Heart right ventricle (tissue), 16 donors: ENCODE measurements at regions of chr15 and their contacts with region 1.

Region 1: DNA sequence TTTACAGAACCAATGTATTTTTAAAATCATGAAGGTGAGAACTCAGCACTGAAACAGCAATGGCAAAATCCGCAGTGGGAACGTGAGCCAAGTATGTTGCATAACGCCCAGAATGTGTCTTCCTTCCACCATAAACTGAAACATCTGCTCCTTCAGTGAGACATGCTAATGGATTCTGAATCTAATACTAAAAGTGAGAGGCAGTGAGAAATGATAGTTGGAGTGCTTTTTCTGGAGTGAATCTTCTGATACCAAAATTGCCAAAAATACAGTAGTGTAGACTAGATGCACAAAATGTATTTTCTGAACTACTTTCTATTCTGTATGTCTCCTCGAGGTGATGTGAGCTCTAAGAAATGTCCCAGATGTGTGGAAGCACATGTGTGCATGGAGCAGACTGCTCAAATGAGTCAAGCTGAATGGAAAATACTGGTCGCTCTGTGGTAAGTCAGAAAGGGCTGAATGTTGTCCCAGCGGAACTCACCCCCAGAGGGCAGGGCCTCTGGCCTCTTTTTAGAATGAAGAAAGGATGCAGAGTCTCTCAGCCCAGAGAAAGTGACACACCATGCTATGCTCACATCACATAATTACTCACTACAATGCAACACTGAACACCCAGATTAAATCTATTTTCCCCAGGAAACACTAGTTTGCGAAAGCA is 73.0 kb downstream of the ATP10A start:
- DNase-seq: peak; percentile 49 to 54
- ATAC-seq: peak; percentile 75 to 85 (median 78)
- H3K4me3 ChIP-seq: no peak overlapping the region
- H3K27ac ChIP-seq: peak overlapping the region; percentile 23 to 88 (median 70)
- H3K4me1 ChIP-seq: peaks cover 0 to 65% (median 25%) of the 10 kb centered on the region in 9 donors
- H3K27me3 ChIP-seq: no peaks in the 10 kb centered on the region
- CTCF ChIP-seq: peak in 1 of 9 donors; percentile 4

Region 2: GRCh38 chr15:25759421-25759820 is 30.7 kb before region 1 on chr15:
- intact Hi-C with region 1: no loop called
- DNase-seq: no peak
- ATAC-seq: no peak
- H3K4me3 ChIP-seq: no peak overlapping the region
- H3K27ac ChIP-seq: no peak overlapping the region
- H3K4me1 ChIP-seq: no peaks in the 10 kb centered on the region
- H3K27me3 ChIP-seq: no peaks in the 10 kb centered on the region
- CTCF ChIP-seq: no peak

Region 3: GRCh38 chr15:25775317-25775912 is 14.7 kb before region 1 on chr15:
- intact Hi-C with region 1: loop called in 1 of 10 experiments (anchors 1 kb)
- DNase-seq: peak; percentile 64 to 81
- ATAC-seq: peak; percentile 84 to 95 (median 92)
- H3K4me3 ChIP-seq: no peak overlapping the region
- H3K27ac ChIP-seq: peak overlapping the region in 4 of 10 donors; percentile 18 to 45 (median 37)
- H3K4me1 ChIP-seq: peaks cover 0 to 19% (median 12%) of the 10 kb centered on the region in 9 donors
- H3K27me3 ChIP-seq: no peaks in the 10 kb centered on the region
- CTCF ChIP-seq: no peak

Region 4: GRCh38 chr15:25850154-25851111 is 60.3 kb after region 1 on chr15:
- intact Hi-C with region 1: loop called in 2 of 10 experiments (anchors 2 to 5 kb)
- DNase-seq: peak; percentile 77 to 79
- ATAC-seq: peak; percentile 84 to 95 (median 89)
- H3K4me3 ChIP-seq: peak overlapping the region in 9 of 10 donors; percentile 23 to 53 (median 46)
- H3K27ac ChIP-seq: peak overlapping the region; percentile 40 to 86 (median 75)
- H3K4me1 ChIP-seq: peaks cover 0 to 50% (median 15%) of the 10 kb centered on the region in 9 donors
- H3K27me3 ChIP-seq: peaks cover 0 to 4% (median 0%) of the 10 kb centered on the region in 7 donors
- CTCF ChIP-seq: no peak